ENCODE measurements at regions of chr19 and their contacts with region 1.

Region 1: GRCh38 chr19:18610556-18611326 is 1.9 kb upstream of the TMEM59L start:
- DNase-seq: no peak
- H3K4me3 ChIP-seq: no peak overlapping the region
- H3K27ac ChIP-seq: no peak overlapping the region
- H3K4me1 ChIP-seq: peaks cover 16% of the 10 kb centered on the region
- H3K27me3 ChIP-seq: peaks cover 67 to 78% of the 10 kb centered on the region in 2 experiments
- CTCF ChIP-seq: no peak
- POLR2A ChIP-seq: no peak

Region 2: DNA sequence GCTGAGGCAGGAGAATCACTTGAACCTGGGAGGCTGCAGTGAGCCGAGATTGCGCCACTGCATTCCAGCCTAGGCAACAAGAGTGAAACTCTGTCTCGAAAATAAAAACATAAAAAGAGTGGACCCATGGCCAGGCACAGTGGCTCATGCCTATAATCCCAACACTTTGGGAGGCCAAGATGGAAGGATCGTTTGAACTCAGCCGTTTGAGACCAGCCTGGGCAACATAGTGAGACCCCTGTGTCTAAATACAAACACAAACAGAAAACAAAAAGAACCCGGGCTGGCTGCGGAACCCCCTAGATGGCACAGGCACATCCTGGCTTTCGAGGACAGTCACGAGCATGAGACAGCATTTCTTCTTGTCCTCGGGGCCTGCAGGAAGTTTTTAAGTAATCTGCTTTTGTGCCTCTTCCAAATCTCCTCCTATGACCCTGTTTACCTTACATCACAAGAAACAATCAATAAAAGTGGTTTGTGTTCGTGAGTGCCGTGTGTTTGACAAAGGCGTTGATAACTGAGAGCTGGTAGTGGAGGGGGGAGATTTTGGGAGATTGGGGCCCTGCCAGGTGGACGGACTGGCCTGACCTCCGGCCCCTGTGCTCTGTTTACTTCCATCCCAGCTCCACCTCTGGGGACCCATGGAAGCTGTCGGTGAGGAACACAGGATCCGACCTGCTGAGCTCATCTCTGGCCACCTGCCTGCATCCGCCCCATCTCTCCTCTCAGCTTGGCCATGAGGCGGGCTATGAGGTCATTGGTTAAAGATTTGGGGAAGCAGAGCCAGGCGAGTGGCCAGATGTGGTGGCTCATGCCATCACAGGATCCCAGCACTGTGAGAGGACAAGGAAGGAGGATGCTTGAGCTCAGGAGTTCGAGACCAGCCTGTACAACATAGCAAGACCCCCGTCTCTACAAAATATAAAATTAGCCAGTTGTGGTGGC is 230.7 kb before region 1 on chr19:
- CTCF ChIA-PET with region 1: no interaction called
- POLR2A ChIA-PET with region 1: no interaction called
- dilution Hi-C with region 1: no loop called
- intact Hi-C with region 1: no loop called
- DNase-seq: no peak
- H3K4me3 ChIP-seq: no peak overlapping the region
- H3K27ac ChIP-seq: no peak overlapping the region
- H3K4me1 ChIP-seq: peaks cover 3% of the 10 kb centered on the region
- H3K27me3 ChIP-seq: no peaks in the 10 kb centered on the region
- CTCF ChIP-seq: no peak
- POLR2A ChIP-seq: no peak

Region 3: DNA sequence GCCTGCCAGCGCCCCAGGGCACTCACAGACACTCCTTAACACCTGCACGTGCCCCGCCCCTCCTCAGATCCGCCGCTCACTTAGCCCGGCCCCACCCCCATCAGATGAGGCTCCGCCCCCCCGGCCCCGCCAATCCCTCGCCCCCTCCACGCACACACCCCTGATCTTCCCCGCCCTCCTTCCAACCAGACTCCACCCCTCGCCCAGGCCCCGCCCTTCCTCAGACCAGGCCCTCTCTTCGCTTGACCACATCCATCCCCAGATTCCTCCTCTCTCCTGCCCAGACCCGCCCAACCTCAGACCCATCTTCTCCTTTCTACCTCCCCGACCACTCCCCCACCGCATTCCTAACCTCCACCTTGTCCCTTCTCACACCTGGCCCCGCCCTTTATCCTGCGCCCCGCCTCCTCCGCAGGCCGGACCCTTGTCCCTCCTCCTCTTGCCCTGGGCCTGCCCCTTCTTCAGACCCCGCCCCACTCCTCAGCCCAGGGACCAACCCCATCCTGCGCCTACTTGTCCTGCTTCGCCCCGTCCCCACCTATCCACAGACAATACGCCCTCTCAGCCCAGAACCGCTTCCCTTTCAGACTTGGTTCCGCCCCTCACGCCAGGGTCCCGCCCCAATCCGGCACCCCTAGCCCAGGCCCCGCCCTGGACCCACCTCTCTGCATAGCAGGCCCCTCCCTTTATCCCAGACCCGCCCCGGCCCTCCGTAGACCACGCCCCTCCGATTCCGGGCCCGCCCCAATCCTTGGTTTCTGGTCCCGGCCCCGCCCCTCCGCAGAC is 25.6 kb after region 1 on chr19:
- CTCF ChIA-PET with region 1: no interaction called
- POLR2A ChIA-PET with region 1: no interaction called
- dilution Hi-C with region 1: no loop called
- intact Hi-C with region 1: loop called (anchors 1 kb)
- DNase-seq: peak; percentile 96
- H3K4me3 ChIP-seq: peak overlapping the region in 2 of 3 experiments; percentile 3 to 60
- H3K27ac ChIP-seq: no peak overlapping the region
- H3K4me1 ChIP-seq: peaks cover 4% of the 10 kb centered on the region
- H3K27me3 ChIP-seq: no peaks in the 10 kb centered on the region
- CTCF ChIP-seq: no peak
- POLR2A ChIP-seq: no peak